Mammary epithelial cell (primary cell): ENCODE measurements at regions of chr12 and their contacts with region 1.

Region 1: DNA sequence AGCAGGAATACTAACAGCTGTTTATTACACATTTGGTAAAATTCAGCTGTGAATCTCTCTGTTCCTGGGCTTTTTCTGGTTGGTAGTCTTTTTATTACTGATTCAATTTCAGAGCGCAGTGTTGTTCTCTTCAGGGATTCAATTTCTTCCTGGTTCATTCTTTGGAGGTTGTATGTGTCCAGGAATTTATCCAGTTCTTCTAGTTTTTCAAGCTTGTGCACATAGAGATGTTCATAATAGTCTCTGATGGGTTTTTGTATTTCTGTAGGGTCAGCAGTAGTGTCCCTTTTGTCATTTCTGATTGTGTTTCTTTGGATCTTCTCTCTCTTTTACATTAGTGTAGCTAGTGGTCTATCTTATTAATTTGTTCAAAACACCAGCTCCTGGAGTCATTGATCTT is 9.1 kb upstream of the OR6C76 start:
- DNase-seq: no peak
- H3K4me3 ChIP-seq: no peak overlapping the region
- H3K27ac ChIP-seq: no peak overlapping the region
- H3K4me1 ChIP-seq: no peaks in the 10 kb centered on the region
- H3K27me3 ChIP-seq: no peaks in the 10 kb centered on the region
- CTCF ChIP-seq: no peak

Region 2: GRCh38 chr12:55707841-55708694 is 291.1 kb after region 1 on chr12 and contains the start of gene ITGA7:
- CTCF ChIA-PET with region 1: no interaction called
- dilution Hi-C with region 1: no loop called
- in situ Hi-C with region 1: no loop called
- intact Hi-C with region 1: loop called (anchors 5 kb)
- DNase-seq: no peak
- H3K4me3 ChIP-seq: peak within 1 kb of the TSS in 2 of 3 experiments; percentile 34 to 43
- H3K27ac ChIP-seq: no peak within 1 kb of the TSS
- H3K4me1 ChIP-seq: no peaks in the 10 kb centered on the region
- H3K27me3 ChIP-seq: peaks cover 10% of the 10 kb centered on the region
- CTCF ChIP-seq: no peak
- total RNA-seq, gene ITGA7: 0.33 to 2.1 TPM